ENCODE measurements at regions of chr4 and their contacts with region 1.

Region 1: DNA sequence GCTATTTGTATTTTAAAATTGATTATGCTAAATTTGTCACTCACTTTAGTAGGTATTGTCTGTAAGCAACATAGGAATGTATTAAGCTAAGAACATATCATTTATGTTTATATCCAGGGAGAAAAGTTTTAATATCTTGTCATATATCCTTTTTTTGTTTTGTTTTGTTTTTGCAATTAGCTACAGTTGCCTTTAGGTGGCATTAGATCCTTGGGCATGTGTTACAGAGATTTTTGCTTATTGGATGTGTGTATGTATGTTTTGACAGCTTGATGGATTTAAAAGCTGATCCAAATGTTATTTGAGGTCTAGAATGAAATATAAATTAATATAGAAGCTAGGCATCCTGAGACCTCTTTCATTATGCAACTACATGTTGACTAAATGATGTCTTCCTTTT is 36.1 kb upstream of the OTUD4 start:
- DNase-seq: no peak
- H3K4me3 ChIP-seq: no peak overlapping the region
- H3K27ac ChIP-seq: no peak overlapping the region
- H3K4me1 ChIP-seq: peaks cover 0 to 3% (median 0%) of the 10 kb centered on the region in 4 experiments; a peak in 1 of 7 replicates
- H3K27me3 ChIP-seq: no peaks in the 10 kb centered on the region
- CTCF ChIP-seq: peak in 2 of 3 experiments; percentile 36 to 57; a peak in 2 of 4 replicates
- EP300 ChIP-seq: no peak
- POLR2A ChIP-seq: no peak
- RAD21 ChIP-seq: peak; percentile 77 to 83

Region 2: DNA sequence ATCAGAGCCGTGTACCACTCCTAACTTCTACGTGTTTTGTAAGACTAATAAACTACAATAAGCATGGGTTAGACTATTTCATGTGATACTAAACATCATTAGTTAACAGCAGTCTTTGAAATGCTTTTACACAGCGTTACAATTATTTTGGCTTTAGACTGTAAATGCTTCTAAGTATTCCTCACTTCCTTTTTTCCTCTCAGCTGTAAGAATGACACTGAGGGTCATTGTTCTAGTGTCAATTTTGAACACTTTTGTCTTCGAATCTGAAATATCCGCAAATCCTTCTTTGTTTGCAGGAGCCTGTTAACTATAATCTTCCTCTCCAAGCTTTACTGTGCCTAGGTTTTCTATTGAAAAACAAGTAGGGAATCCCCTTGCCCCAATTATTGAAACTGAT is 116.9 kb before region 1 on chr4:
- CTCF ChIA-PET with region 1: no interaction called
- POLR2A ChIA-PET with region 1: no interaction called
- DNase-seq: no peak
- H3K4me3 ChIP-seq: peak overlapping the region in 3 of 4 experiments; percentile 88 to 96 (median 96); a peak in 4 of 8 replicates
- H3K27ac ChIP-seq: no peak overlapping the region
- H3K4me1 ChIP-seq: peaks cover 0 to 6% (median 1%) of the 10 kb centered on the region in 4 experiments; a peak in 2 of 7 replicates
- H3K27me3 ChIP-seq: no peaks in the 10 kb centered on the region
- CTCF ChIP-seq: no peak
- EP300 ChIP-seq: no peak
- POLR2A ChIP-seq: no peak
- RAD21 ChIP-seq: no peak

Region 3: GRCh38 chr4:145234091-145234706 is 17.7 kb after region 1 on chr4:
- CTCF ChIA-PET with region 1: interaction called, 12 read pairs
- POLR2A ChIA-PET with region 1: no interaction called
- DNase-seq: peak; percentile 9 to 56
- H3K4me3 ChIP-seq: no peak overlapping the region
- H3K27ac ChIP-seq: no peak overlapping the region
- H3K4me1 ChIP-seq: no peaks in the 10 kb centered on the region
- H3K27me3 ChIP-seq: no peaks in the 10 kb centered on the region
- CTCF ChIP-seq: peak in 2 of 3 experiments; percentile 67 to 68; a peak in 3 of 4 replicates
- EP300 ChIP-seq: no peak
- POLR2A ChIP-seq: no peak
- RAD21 ChIP-seq: peak; percentile 88 to 90

Region 4: GRCh38 chr4:145557720-145558119 is 341.2 kb after region 1 on chr4:
- CTCF ChIA-PET with region 1: interaction called, 18 read pairs
- POLR2A ChIA-PET with region 1: no interaction called
- DNase-seq: peak; percentile 29 to 69
- H3K4me3 ChIP-seq: no peak overlapping the region
- H3K27ac ChIP-seq: no peak overlapping the region
- H3K4me1 ChIP-seq: no peaks in the 10 kb centered on the region
- H3K27me3 ChIP-seq: peaks cover 0 to 1% (median 0%) of the 10 kb centered on the region in 4 experiments; a peak in 1 of 7 replicates
- CTCF ChIP-seq: peak; percentile 77 to 99 (median 90)
- EP300 ChIP-seq: no peak
- POLR2A ChIP-seq: no peak
- RAD21 ChIP-seq: peak; percentile 86 to 90

Region 5: GRCh38 chr4:145609481-145610427 is 393.2 kb after region 1 on chr4:
- CTCF ChIA-PET with region 1: interaction called, 25 read pairs
- POLR2A ChIA-PET with region 1: no interaction called
- DNase-seq: peak in 1 of 2 experiments; percentile 76
- H3K4me3 ChIP-seq: no peak overlapping the region
- H3K27ac ChIP-seq: no peak overlapping the region
- H3K4me1 ChIP-seq: no peaks in the 10 kb centered on the region
- H3K27me3 ChIP-seq: no peaks in the 10 kb centered on the region
- CTCF ChIP-seq: peak in 2 of 3 experiments; percentile 74; a peak in 3 of 4 replicates
- EP300 ChIP-seq: no peak
- POLR2A ChIP-seq: no peak
- RAD21 ChIP-seq: peak; percentile 90 to 91

Region 6: DNA sequence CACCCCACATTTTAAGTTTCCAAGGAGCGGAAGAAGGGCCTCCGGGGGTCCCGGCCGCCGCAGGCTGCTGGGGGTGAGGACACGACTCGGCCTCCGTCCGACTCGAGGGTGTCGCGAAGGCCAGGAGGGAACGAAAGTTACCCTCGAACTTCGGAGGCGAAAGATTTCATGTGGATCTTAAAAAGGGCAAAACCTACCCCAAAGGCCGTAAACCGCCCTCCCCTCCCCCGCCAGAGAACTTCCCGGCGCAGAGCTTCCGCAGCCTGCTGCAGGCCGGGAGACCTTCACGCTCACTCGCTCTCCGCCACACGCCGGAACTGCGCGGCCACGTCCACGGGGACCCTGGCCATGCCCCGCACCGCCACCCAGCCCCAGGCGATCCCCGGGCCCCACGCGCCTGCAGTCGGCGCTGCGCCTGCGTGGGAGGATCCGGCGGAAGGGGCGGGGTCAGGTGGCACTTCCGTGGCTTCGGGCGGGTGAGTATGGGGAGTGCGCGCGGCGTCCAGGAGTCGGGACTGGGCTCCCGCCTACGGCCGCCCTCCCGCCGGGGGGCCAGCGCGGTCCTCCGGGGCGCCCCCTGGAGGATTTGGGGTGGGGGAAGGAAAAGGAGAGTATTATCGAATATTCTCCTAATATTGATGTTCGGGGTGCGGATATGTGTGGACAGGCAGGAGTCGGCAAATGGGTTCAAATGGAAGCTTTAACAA is 402.6 kb after region 1 on chr4 and contains the start of gene MMAA:
- CTCF ChIA-PET with region 1: interaction called, 10 read pairs
- POLR2A ChIA-PET with region 1: no interaction called
- DNase-seq: peak; percentile 59 to 95
- H3K4me3 ChIP-seq: peak within 1 kb of the TSS; percentile 71 to 96 (median 80)
- H3K27ac ChIP-seq: peak within 1 kb of the TSS; percentile 74; the same call in 1 of the 2 replicates
- H3K4me1 ChIP-seq: peaks cover 0 to 5% (median 2%) of the 10 kb centered on the region in 4 experiments; a peak in 4 of 7 replicates
- H3K27me3 ChIP-seq: no peaks in the 10 kb centered on the region
- CTCF ChIP-seq: peak; percentile 55 to 59 (median 58)
- EP300 ChIP-seq: no peak
- POLR2A ChIP-seq: peak in 1 of 2 experiments; percentile 81; a peak in 2 of 3 replicates
- RAD21 ChIP-seq: peak; percentile 31 to 52; a peak in 3 of 4 replicates
- total RNA-seq, gene MMAA: 3.6 and 4.9 TPM in 2 replicates